Mammary epithelial cell (primary cell): ENCODE measurements at regions of chr9 and their contacts with region 1.

Region 1: GRCh38 chr9:128078504-128079434 is 10.7 kb downstream of the SLC25A25 start:
- DNase-seq: peak; percentile 50
- H3K4me3 ChIP-seq: no peak overlapping the region
- H3K27ac ChIP-seq: no peak overlapping the region
- H3K4me1 ChIP-seq: peaks cover 14% of the 10 kb centered on the region
- H3K27me3 ChIP-seq: no peaks in the 10 kb centered on the region
- CTCF ChIP-seq: no peak

Region 2: DNA sequence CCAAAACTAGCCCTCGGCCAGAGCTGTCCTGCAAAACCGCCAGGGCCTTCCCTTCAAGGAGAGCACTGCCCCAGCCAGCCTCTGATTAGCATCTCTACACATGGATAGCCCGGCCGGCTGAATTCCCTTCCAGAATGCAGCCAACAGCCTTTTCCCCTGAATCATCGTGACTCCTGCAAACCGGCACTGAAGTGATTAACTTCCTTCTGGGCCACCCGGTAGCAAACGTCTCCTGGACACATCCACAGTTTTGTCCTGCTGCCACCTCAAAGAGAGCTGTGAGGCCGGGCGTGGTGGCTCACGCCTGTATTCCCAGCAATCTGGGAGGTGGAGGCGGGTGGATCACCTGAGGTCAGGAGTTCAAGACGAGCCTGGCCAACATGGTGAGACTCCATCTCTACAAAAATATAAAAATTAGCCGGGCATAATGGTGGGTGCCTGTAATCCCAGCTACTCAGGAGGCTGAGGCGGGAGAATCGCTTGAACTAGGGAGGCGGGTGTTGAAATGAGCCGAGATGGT is 76.9 kb before region 1 on chr9:
- CTCF ChIA-PET with region 1: no interaction called
- dilution Hi-C with region 1: no loop called
- in situ Hi-C with region 1: no loop called
- intact Hi-C with region 1: no loop called
- DNase-seq: peak; percentile 71
- H3K4me3 ChIP-seq: no peak overlapping the region
- H3K27ac ChIP-seq: no peak overlapping the region
- H3K4me1 ChIP-seq: peaks cover 9% of the 10 kb centered on the region
- H3K27me3 ChIP-seq: no peaks in the 10 kb centered on the region
- CTCF ChIP-seq: no peak

Region 3: GRCh38 chr9:128150594-128151308 is 72.0 kb after region 1 on chr9:
- CTCF ChIA-PET with region 1: no interaction called
- dilution Hi-C with region 1: no loop called
- in situ Hi-C with region 1: no loop called
- intact Hi-C with region 1: no loop called
- DNase-seq: no peak
- H3K4me3 ChIP-seq: no peak overlapping the region
- H3K27ac ChIP-seq: no peak overlapping the region
- H3K4me1 ChIP-seq: peaks cover 20% of the 10 kb centered on the region
- H3K27me3 ChIP-seq: no peaks in the 10 kb centered on the region
- CTCF ChIP-seq: peak in 1 of 2 donors; percentile 6

Region 4: DNA sequence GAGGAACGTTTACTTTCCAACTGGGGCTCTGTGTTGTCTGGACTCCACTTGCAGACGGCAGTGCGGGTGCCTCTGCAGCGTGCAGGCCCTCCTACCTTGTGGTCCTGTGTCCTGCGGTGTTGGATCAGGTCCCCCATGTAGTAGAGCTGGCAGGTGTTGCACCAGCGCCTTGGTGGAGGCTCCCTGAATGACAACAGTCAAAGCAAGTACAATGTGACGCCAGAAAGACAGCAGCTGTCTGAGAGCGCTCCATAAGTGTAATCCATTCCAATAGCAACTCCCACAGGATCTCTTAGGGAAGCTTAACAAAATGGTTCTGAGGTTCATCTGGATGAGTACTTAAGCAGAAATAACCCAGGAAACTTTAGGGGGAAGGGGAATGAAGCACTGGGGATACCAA is 91.2 kb after region 1 on chr9:
- CTCF ChIA-PET with region 1: no interaction called
- dilution Hi-C with region 1: loop called (anchors 5 kb)
- in situ Hi-C with region 1: no loop called
- intact Hi-C with region 1: no loop called
- DNase-seq: no peak
- H3K4me3 ChIP-seq: no peak overlapping the region
- H3K27ac ChIP-seq: no peak overlapping the region
- H3K4me1 ChIP-seq: no peaks in the 10 kb centered on the region
- H3K27me3 ChIP-seq: no peaks in the 10 kb centered on the region
- CTCF ChIP-seq: no peak

Region 5: DNA sequence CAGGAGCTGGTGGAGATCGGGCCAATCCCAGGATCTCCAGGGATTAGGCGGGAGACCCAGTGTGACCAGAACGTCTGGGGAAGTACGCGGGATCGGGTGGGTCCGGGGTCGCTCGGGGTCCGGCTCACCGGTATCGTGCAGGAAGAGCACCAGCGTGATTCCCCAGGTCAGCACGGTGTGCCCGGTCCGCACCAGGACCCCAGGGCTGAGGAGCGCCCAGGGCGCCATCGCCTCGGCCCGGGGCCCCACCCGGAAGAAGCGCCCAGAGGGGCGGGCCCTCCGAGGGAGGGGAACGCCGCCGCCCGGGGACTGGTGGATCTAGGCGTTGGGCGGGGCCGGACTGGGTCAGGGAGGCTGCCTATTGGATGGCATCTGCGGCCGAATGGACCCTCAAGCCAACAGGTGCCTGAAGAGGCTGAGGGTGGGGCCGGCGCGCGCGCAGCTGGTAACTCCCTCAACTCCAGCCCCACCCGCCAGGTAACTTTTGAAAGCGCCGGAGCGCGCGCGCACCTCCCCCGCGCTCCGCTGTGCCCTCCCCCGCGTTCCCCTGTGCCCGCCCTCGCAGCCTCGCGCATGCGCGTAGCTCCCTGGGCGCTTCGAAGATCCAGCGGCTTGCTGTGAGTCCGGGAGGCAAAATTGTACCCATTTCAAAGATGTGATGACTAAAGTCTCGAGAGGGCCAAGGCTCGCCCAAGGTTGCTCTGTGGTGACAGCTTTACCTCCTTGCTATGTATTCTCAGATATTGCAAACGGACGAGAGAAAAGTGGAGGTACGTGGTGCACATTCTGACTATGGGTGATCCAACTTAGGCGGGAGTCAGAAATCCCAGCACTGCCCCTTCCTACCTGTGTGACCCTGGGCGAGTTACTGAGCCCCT is 645.3 kb after region 1 on chr9 and contains the start of gene ZDHHC12:
- CTCF ChIA-PET with region 1: no interaction called
- dilution Hi-C with region 1: no loop called
- in situ Hi-C with region 1: no loop called
- intact Hi-C with region 1: no loop called
- DNase-seq: peak; percentile 98
- H3K4me3 ChIP-seq: peak within 1 kb of the TSS; percentile 80 to 87 (median 87)
- H3K27ac ChIP-seq: peak within 1 kb of the TSS; percentile 53
- H3K4me1 ChIP-seq: peaks cover 13% of the 10 kb centered on the region
- H3K27me3 ChIP-seq: no peaks in the 10 kb centered on the region
- CTCF ChIP-seq: no peak
- total RNA-seq, gene ZDHHC12: 30.0 to 61.3 TPM